ENCODE measurements at regions of chr6 and their contacts with region 1.

Region 1: GRCh38 chr6:130322673-130323268 is 43.0 kb upstream of the TMEM200A start:
- DNase-seq: peak; percentile 52
- H3K4me3 ChIP-seq: no peak overlapping the region
- H3K27ac ChIP-seq: no peak overlapping the region
- H3K27me3 ChIP-seq: no peaks in the 10 kb centered on the region
- CTCF ChIP-seq: peak; percentile 94

Region 2: GRCh38 chr6:128767705-128768104 is 1555.1 kb before region 1 on chr6:
- CTCF ChIA-PET with region 1: interaction called, 11 read pairs
- POLR2A ChIA-PET with region 1: no interaction called
- DNase-seq: no peak
- H3K4me3 ChIP-seq: no peak overlapping the region
- H3K27ac ChIP-seq: no peak overlapping the region
- H3K27me3 ChIP-seq: no peaks in the 10 kb centered on the region
- CTCF ChIP-seq: no peak